Naive thymus-derived CD4-positive, alpha-beta T cell (primary cell): ENCODE measurements at regions of chr2 and their contacts with region 1.

Region 1: GRCh38 chr2:64698668-64699444 is 45.1 kb upstream of the SERTAD2 start:
- DNase-seq: no peak
- ATAC-seq: peak; percentile 76
- H3K4me3 ChIP-seq: no peak overlapping the region
- H3K4me3 Mint-ChIP-seq: peak overlapping the region in 1 of 10 donors; percentile 80
- H3K27ac ChIP-seq: no peak overlapping the region
- H3K27ac Mint-ChIP-seq: peak overlapping the region in 4 of 9 donors; percentile 2 to 79 (median 36)
- H3K4me1 ChIP-seq: peaks cover 8 to 12% of the 10 kb centered on the region in 2 donors
- H3K4me1 Mint-ChIP-seq: peaks cover 21 to 59% (median 41%) of the 10 kb centered on the region in 7 donors
- H3K27me3 ChIP-seq: no peaks in the 10 kb centered on the region
- H3K27me3 Mint-ChIP-seq: no peaks in the 10 kb centered on the region

Region 2: GRCh38 chr2:64666810-64667438 is 31.9 kb before region 1 on chr2:
- CTCF ChIA-PET with region 1: no interaction called
- POLR2A ChIA-PET with region 1: no interaction called
- intact Hi-C with region 1: loop called in 1 of 2 experiments (anchors 2 kb)
- DNase-seq: peak in 3 of 9 donors; percentile 43 to 51 (median 51)
- ATAC-seq: peak; percentile 61
- H3K4me3 ChIP-seq: peak overlapping the region; percentile 12
- H3K4me3 Mint-ChIP-seq: peak overlapping the region in 9 of 10 donors; percentile 3 to 76 (median 64)
- H3K27ac ChIP-seq: peak overlapping the region; percentile 58
- H3K27ac Mint-ChIP-seq: peak overlapping the region in 3 of 9 donors; percentile 71 to 91 (median 85)
- H3K4me1 ChIP-seq: peaks cover 15 to 55% of the 10 kb centered on the region in 2 donors
- H3K4me1 Mint-ChIP-seq: peaks cover 28 to 46% (median 35%) of the 10 kb centered on the region in 7 donors
- H3K27me3 ChIP-seq: no peaks in the 10 kb centered on the region
- H3K27me3 Mint-ChIP-seq: no peaks in the 10 kb centered on the region

Region 3: GRCh38 chr2:64675860-64676259 is 23.0 kb before region 1 on chr2:
- CTCF ChIA-PET with region 1: interaction called, 4 read pairs
- POLR2A ChIA-PET with region 1: interaction called, 3 read pairs
- intact Hi-C with region 1: loop called in 1 of 2 experiments (anchors 2 kb)
- DNase-seq: peak in 2 of 9 donors; percentile 19 to 71
- ATAC-seq: peak; percentile 46
- H3K4me3 ChIP-seq: no peak overlapping the region
- H3K4me3 Mint-ChIP-seq: peak overlapping the region in 4 of 10 donors; percentile 4 to 35 (median 14)
- H3K27ac ChIP-seq: no peak overlapping the region
- H3K27ac Mint-ChIP-seq: peak overlapping the region in 5 of 9 donors; percentile 9 to 80 (median 59)
- H3K4me1 ChIP-seq: peaks cover 0 to 19% of the 10 kb centered on the region in 2 donors
- H3K4me1 Mint-ChIP-seq: peaks cover 9 to 88% (median 47%) of the 10 kb centered on the region in 7 donors
- H3K27me3 ChIP-seq: no peaks in the 10 kb centered on the region
- H3K27me3 Mint-ChIP-seq: no peaks in the 10 kb centered on the region

Region 4: DNA sequence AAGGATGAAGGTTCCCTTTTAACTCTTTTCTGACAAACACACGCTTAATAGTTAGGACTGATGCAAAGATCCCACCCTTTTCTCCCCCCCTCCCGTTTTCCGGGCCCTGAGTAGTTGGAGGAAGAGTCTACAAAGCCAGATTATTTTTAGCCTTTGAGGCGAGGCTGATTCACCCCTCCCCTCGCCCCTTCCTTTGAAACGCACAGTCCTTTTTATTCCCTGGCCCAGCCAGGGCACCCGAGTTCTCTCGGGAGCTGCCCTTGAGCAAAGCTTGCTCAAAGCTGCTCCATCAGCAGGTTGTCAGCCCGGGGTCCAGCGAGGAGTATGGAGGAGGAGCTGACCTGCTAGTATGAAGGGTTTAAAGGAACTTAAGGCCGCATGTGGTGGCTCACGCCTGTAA is 780.7 kb after region 1 on chr2:
- CTCF ChIA-PET with region 1: no interaction called
- POLR2A ChIA-PET with region 1: no interaction called
- intact Hi-C with region 1: no loop called
- DNase-seq: no peak
- ATAC-seq: no peak
- H3K4me3 ChIP-seq: no peak overlapping the region
- H3K4me3 Mint-ChIP-seq: no peak overlapping the region
- H3K27ac ChIP-seq: no peak overlapping the region
- H3K27ac Mint-ChIP-seq: no peak overlapping the region
- H3K4me1 ChIP-seq: no peaks in the 10 kb centered on the region
- H3K4me1 Mint-ChIP-seq: no peaks in the 10 kb centered on the region
- H3K27me3 ChIP-seq: no peaks in the 10 kb centered on the region
- H3K27me3 Mint-ChIP-seq: peaks cover 0 to 17% (median 9%) of the 10 kb centered on the region in 5 donors